ENCODE measurements at regions of chr21 and their contacts with region 1.

Region 1: DNA sequence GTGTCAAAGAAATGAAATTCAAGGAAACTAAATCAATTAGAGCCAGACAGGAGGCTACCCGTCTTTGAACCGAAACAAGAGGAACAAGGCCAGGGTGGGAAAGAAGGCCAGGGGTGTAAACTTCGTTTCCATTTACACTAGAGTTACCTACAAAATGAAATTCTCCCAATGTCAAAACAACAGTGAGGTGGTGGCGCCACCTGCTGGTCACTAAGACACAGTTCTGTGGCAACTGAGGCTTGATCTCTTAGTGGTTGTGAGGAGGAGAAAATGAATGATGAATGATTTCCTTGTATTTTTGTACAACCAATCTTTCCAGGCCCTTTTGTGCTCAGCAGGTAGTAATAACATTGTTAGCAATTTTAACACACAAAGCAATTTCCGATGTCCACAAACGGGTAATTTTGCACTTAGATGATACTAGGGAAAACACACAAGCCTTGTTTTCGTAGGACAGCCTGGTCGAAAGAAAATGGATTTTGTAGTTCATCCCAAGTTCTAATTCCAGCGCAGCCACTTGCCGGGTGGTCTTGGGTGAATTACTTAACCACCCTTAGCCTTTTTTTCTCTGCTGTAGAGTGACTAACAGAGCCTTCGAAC is 54.8 kb upstream of the SOD1 start:
- H3K4me3 Mint-ChIP-seq: no peak overlapping the region
- H3K27ac Mint-ChIP-seq: no peak overlapping the region
- H3K4me1 Mint-ChIP-seq: no peaks in the 10 kb centered on the region
- H3K27me3 Mint-ChIP-seq: peaks cover 3% of the 10 kb centered on the region

Region 2: GRCh38 chr21:30044445-30045064 is 1560.1 kb before region 1 on chr21:
- intact Hi-C with region 1: loop called (anchors 10 kb)
- H3K4me3 Mint-ChIP-seq: no peak overlapping the region
- H3K27ac Mint-ChIP-seq: no peak overlapping the region
- H3K4me1 Mint-ChIP-seq: no peaks in the 10 kb centered on the region
- H3K27me3 Mint-ChIP-seq: no peaks in the 10 kb centered on the region

Region 3: DNA sequence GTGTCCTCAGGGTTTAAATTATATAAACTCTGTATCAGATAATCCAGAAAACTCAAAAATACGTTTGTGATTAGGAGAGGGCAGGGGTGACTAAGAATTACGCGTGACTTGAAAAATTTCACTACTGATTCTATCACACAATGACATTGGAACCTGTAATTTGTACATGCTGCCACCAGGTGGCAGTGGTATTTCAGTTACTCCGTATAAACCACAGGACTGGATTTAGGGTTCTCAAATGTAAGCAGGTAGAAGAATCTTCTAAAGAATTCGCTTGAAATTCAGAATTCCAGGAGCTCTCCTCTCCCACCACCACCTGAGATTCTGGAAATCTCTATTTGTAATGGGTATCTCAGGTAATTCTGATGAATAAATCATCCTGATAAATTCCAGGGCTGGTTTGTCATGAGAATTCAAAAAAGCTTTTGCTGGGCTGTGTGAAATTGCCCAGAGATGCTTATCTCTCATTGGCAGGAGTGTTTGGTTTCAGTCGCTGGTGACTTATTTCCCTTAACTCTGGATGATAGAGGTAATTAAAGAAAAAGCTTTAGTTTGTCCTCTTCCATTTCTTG is 773.4 kb before region 1 on chr21:
- intact Hi-C with region 1: loop called (anchors 2 kb)
- H3K4me3 Mint-ChIP-seq: no peak overlapping the region
- H3K27ac Mint-ChIP-seq: no peak overlapping the region
- H3K4me1 Mint-ChIP-seq: no peaks in the 10 kb centered on the region
- H3K27me3 Mint-ChIP-seq: no peaks in the 10 kb centered on the region

Region 4: GRCh38 chr21:31098576-31099005 is 506.1 kb before region 1 on chr21:
- intact Hi-C with region 1: loop called (anchors 5 kb)
- H3K4me3 Mint-ChIP-seq: no peak overlapping the region
- H3K27ac Mint-ChIP-seq: no peak overlapping the region
- H3K4me1 Mint-ChIP-seq: peaks cover 31% of the 10 kb centered on the region
- H3K27me3 Mint-ChIP-seq: peaks cover 9% of the 10 kb centered on the region

Region 5: DNA sequence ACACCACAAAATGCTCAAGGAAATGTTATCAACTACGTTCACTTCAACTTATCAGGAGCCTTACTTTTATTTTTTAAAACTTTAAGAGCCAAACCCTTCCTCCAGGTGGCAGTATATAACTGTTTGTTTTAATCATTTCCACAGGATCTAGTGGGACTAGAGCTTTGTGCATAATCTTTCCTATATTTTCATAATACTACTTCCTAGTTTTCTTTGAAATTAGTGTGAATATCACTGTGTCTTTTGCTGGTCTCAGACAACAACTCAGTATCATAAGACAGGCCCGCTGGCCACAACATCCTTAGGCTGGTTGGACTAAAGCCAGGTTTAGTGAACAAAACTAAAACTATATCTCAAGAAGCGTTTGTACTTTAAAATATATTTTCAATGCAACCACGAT is 406.1 kb before region 1 on chr21:
- intact Hi-C with region 1: loop called (anchors 1 kb)
- H3K4me3 Mint-ChIP-seq: no peak overlapping the region
- H3K27ac Mint-ChIP-seq: peak overlapping the region; percentile 79
- H3K4me1 Mint-ChIP-seq: peaks cover 48% of the 10 kb centered on the region
- H3K27me3 Mint-ChIP-seq: no peaks in the 10 kb centered on the region

Region 6: GRCh38 chr21:31509194-31510017 is 95.3 kb before region 1 on chr21:
- intact Hi-C with region 1: no loop called
- H3K4me3 Mint-ChIP-seq: no peak overlapping the region
- H3K27ac Mint-ChIP-seq: no peak overlapping the region
- H3K4me1 Mint-ChIP-seq: peaks cover 24% of the 10 kb centered on the region
- H3K27me3 Mint-ChIP-seq: peaks cover 2% of the 10 kb centered on the region

Region 7: GRCh38 chr21:31592963-31593560 is 11.6 kb before region 1 on chr21:
- intact Hi-C with region 1: no loop called
- H3K4me3 Mint-ChIP-seq: no peak overlapping the region
- H3K27ac Mint-ChIP-seq: no peak overlapping the region
- H3K4me1 Mint-ChIP-seq: no peaks in the 10 kb centered on the region
- H3K27me3 Mint-ChIP-seq: peaks cover 3% of the 10 kb centered on the region

Measured in dendritic cell treated with granulocyte-macrophage colony-stimulating factor and Interleukin-4, amounts not matched to agents 40 ng/mL and 50 ng/mL, for 4 days (primary cell).